Ovary (tissue), 10 donors: ENCODE measurements at regions of chr12 and their contacts with region 1.

Region 1: GRCh38 chr12:91825999-91826398 is 319.6 kb downstream of the BTG1 start:
- DNase-seq: no peak
- H3K4me3 ChIP-seq: no peak overlapping the region
- H3K27ac ChIP-seq: no peak overlapping the region
- H3K4me1 ChIP-seq: no peaks in the 10 kb centered on the region
- H3K27me3 ChIP-seq: no peaks in the 10 kb centered on the region
- CTCF ChIP-seq: no peak
- EP300 ChIP-seq: no peak
- POLR2A ChIP-seq: no peak

Region 2: DNA sequence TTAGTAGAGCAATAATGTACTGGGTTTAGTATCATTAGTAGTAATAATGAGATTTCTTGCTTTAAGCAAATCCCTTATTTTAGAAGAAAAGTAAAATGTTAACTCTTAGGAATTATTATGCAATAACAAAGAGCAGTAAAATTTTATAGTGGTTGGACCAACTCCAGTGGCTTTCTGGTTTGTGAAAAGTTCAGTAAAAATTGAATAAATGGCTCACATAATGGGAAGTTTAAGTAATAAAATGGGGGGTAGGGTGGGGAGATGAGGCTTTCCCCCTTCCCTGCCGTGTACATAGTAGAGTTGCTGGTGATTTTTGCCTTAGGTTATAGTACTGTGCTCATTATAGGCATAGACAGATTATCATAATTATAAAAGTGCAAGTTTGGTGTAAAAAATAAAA is 1866.8 kb before region 1 on chr12:
- intact Hi-C with region 1: loop called in 1 of 4 experiments (anchors 5 kb)
- DNase-seq: no peak
- H3K4me3 ChIP-seq: no peak overlapping the region
- H3K27ac ChIP-seq: no peak overlapping the region
- H3K4me1 ChIP-seq: peaks cover 1% of the 10 kb centered on the region
- H3K27me3 ChIP-seq: no peaks in the 10 kb centered on the region
- CTCF ChIP-seq: no peak
- EP300 ChIP-seq: no peak
- POLR2A ChIP-seq: no peak

Region 3: DNA sequence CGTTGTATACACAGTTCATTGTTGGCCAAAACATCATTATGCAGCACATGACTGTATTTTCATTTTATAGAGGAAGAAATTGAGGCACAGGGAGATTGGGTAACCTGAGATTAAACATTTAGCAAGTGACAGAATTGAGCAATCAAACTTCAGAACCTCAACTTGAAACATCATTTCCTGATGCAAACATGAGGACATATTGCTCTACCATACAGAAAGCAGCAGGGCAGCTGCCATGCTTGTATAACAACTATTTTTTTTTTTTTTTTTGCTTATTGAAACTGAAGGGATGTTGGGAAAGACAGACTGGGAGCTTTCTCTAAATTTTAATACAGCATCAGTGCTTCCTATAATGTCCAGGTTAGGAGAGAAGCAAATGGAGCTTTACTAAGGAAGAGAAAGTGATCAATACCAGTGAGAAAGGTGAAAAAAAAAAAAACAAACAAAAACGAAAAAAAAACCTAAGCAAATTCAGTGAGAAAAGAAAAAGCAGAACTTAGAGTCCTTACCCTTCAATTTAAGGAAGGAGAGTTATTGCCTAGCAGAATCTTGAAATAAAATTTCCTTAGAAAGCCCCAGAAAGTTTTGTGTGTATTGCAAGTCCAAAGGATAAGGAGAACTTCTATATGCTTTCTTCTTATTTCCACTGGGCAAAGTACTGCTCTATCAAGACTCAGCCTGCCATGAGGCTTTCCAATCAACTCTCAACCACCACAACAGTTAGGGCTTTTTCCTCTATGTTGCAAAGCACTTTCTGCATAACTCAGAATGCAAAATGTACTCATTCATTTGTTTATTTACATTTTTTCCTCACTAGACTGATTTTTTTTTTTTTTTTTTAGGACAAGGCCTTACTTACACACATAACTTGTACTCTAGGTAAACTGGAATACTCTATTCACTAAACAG is 298.0 kb after region 1 on chr12:
- intact Hi-C with region 1: no loop called
- DNase-seq: no peak
- H3K4me3 ChIP-seq: no peak overlapping the region
- H3K27ac ChIP-seq: no peak overlapping the region
- H3K4me1 ChIP-seq: no peaks in the 10 kb centered on the region
- H3K27me3 ChIP-seq: no peaks in the 10 kb centered on the region
- CTCF ChIP-seq: no peak
- EP300 ChIP-seq: no peak
- POLR2A ChIP-seq: no peak